ENCODE measurements at regions of chr11 and their contacts with region 1.

Region 1: GRCh38 chr11:73141848-73142286 is 251 bp downstream of the FCHSD2 start:
- DNase-seq: peak; percentile 80
- ATAC-seq: peak; percentile 59
- H3K4me3 Mint-ChIP-seq: peak overlapping the region; percentile 90
- H3K27ac Mint-ChIP-seq: peak overlapping the region; percentile 97
- H3K4me1 Mint-ChIP-seq: peaks cover 47% of the 10 kb centered on the region
- H3K27me3 Mint-ChIP-seq: no peaks in the 10 kb centered on the region

Region 2: DNA sequence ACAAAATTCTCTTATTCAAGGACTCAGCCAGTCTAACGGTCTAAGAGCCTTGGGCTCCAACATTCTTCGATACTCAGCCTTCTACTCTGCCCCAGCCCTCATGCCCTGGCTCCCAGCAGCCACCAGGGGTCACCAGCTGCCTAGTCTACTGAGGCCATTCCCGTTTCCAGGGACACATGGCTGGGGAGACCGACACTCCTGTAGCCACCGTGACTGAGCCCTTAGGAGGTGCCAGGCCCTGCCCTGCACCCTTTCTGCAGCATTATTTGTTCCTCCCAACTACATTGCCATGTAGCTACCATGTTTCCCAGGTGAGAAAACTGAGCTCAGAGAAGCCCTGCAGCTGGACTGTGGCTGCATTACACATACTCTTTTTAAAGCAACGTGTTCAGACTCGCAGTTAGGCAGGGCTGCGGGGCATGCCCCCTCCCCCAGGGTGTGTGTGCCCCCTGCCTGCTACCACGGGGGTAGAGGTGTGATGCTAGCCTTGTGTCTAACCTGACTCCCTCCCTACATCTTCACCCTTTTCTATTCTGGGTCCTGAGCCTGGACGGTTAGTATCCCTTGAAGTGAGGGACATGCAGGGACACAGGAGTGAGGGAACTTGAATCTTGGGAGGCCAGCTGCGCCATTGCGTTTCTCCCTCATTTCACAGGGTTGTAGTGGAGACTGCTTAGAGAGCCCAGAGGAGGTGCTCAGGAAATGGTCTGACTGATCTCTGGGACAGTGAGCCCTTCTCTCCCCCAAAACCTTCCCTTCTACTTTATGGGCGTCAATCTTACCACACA is 310.2 kb before region 1 on chr11:
- CTCF ChIA-PET with region 1: interaction called, 11 read pairs
- DNase-seq: peak; percentile 67
- ATAC-seq: peak; percentile 54
- H3K4me3 Mint-ChIP-seq: no peak overlapping the region
- H3K27ac Mint-ChIP-seq: peak overlapping the region; percentile 37
- H3K4me1 Mint-ChIP-seq: peaks cover 34% of the 10 kb centered on the region
- H3K27me3 Mint-ChIP-seq: no peaks in the 10 kb centered on the region

Region 3: DNA sequence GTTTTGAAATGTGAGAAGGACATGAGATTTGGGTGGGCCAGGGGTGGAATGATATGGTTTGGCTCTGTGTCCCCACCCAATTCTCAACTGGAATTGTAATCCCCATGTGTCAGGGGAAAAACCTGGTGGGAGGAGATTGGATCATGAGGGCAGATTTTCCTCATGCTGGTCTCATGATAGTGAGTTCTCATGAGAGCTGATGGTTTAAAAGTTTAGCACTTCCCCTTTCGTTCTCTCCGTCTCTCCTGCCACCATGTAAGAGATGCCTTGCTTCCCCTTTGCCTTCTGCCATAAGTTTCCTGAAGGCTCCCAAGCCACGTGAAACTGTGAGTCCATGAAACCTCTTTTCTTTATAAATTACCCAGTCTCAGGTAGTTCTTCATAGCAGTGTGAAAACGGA is 113.3 kb before region 1 on chr11:
- CTCF ChIA-PET with region 1: no interaction called
- DNase-seq: no peak
- ATAC-seq: no peak
- H3K4me3 Mint-ChIP-seq: no peak overlapping the region
- H3K27ac Mint-ChIP-seq: no peak overlapping the region
- H3K4me1 Mint-ChIP-seq: no peaks in the 10 kb centered on the region
- H3K27me3 Mint-ChIP-seq: no peaks in the 10 kb centered on the region

Region 4: DNA sequence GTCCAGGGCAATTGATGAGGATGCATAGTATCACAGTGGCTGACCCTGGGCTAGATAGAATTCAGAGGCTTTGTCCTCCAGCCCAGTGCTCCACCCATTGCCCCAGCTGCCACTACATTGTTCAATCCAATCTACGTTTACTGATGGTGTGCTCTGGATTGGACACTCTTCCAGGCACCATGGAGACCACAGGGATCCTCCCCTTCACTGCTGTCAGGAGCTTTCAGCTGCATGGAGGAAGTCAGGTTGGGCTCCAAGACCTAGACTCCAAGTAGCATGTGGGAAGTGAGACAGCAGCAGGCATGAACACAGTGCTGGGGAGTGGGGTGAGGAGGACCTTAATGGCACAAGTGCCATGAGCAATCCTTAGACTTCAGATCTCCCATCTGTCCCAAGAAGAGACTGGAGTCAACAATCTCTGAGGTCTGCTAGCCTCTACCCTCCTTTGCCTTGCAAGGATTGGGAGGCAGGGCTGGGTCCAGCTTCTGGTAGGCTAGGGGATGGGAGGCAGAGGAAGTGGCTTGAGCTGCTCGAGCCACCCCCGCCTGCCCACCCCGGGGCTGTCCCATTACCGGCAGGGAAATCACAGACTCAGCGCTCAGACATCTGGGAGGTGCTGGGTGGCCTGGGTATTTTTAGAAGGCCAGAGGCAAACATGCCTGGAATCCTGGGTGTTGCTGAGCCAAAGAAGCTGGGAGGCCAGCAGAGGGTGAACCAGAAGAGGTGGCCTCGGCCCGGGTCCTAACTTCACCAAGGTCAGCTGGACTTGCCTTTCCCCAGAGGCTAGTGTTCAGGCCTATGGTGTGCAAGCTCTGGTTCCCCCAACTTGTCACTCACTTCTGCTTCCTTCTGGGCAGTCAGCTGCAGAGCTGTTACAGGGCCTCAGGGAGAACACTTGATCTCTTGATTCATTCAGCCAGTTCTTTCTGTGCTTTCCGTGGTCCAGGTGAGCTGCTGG is 15.5 kb after region 1 on chr11:
- CTCF ChIA-PET with region 1: interaction called, 83 read pairs
- DNase-seq: no peak
- ATAC-seq: no peak
- H3K4me3 Mint-ChIP-seq: no peak overlapping the region
- H3K27ac Mint-ChIP-seq: no peak overlapping the region
- H3K4me1 Mint-ChIP-seq: peaks cover 53% of the 10 kb centered on the region
- H3K27me3 Mint-ChIP-seq: no peaks in the 10 kb centered on the region

Region 5: GRCh38 chr11:73227588-73228211 is 85.8 kb after region 1 on chr11:
- CTCF ChIA-PET with region 1: no interaction called
- DNase-seq: no peak
- ATAC-seq: no peak
- H3K4me3 Mint-ChIP-seq: no peak overlapping the region
- H3K27ac Mint-ChIP-seq: no peak overlapping the region
- H3K4me1 Mint-ChIP-seq: peaks cover 13% of the 10 kb centered on the region
- H3K27me3 Mint-ChIP-seq: peaks cover 6% of the 10 kb centered on the region

Measured in activated CD8-positive, alpha-beta memory T cell treated with anti-CD3 and anti-CD28 coated beads, Interleukin-2, amount 10 ng/mL, durations not matched to agents 7 days and 5 days (primary cell).